CD8-positive, alpha-beta T cell (primary cell): ENCODE measurements at regions of chr2 and their contacts with region 1.

Region 1: GRCh38 chr2:234218266-234219180 is 168.0 kb downstream of the SPP2 start:
- DNase-seq: peak in 4 of 9 experiments; percentile 11 to 60 (median 14)
- ATAC-seq: no peak
- H3K4me3 ChIP-seq: no peak overlapping the region
- H3K4me3 Mint-ChIP-seq: peak overlapping the region; percentile 52
- H3K27ac ChIP-seq: no peak overlapping the region
- H3K27ac Mint-ChIP-seq: no peak overlapping the region
- H3K4me1 ChIP-seq: peaks cover 31% of the 10 kb centered on the region
- H3K4me1 Mint-ChIP-seq: peaks cover 43% of the 10 kb centered on the region
- H3K27me3 ChIP-seq: no peaks in the 10 kb centered on the region
- H3K27me3 Mint-ChIP-seq: no peaks in the 10 kb centered on the region
- CTCF ChIP-seq: no peak

Region 2: DNA sequence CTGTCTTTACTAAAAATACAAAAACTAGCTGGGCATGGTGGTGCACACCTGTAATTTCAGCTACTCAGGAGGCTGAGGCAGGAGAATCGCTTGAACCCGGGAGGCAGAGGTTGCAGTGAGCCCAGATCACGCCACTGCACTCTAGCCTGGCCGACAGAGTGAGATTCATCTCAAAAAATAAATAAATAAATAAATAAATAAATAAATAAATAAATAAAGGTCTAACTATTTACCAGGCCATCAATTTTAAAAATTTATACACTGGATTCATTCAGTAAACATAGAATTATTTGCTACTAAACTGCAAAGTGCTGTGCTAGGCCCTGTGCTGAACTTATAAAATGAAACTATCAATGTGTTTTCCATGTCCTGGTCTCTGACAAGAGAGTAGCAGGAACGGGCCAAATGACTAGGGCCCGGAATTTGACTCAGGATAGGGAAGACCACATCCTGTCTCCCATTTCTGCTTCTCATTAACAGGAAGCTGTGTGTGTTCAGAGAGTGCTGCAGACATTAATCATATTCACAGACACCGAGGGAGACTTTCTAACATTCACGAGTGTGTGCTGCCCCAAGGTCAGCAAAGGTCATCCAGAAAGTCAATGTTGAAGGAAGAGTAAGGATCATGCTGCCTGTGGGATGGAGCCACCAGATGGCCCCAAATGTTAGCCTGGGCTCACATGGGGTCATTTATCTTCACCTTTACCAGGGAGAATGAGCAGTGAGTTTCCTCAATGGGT is 72.3 kb before region 1 on chr2:
- CTCF ChIA-PET with region 1: no interaction called
- POLR2A ChIA-PET with region 1: no interaction called
- intact Hi-C with region 1: no loop called
- DNase-seq: no peak
- ATAC-seq: no peak
- H3K4me3 ChIP-seq: no peak overlapping the region
- H3K4me3 Mint-ChIP-seq: peak overlapping the region; percentile 10
- H3K27ac ChIP-seq: no peak overlapping the region
- H3K27ac Mint-ChIP-seq: peak overlapping the region; percentile 10
- H3K4me1 ChIP-seq: peaks cover 29% of the 10 kb centered on the region
- H3K4me1 Mint-ChIP-seq: peaks cover 34% of the 10 kb centered on the region
- H3K27me3 ChIP-seq: no peaks in the 10 kb centered on the region
- H3K27me3 Mint-ChIP-seq: no peaks in the 10 kb centered on the region
- CTCF ChIP-seq: no peak

Region 3: GRCh38 chr2:234169187-234169570 is 49.3 kb before region 1 on chr2:
- CTCF ChIA-PET with region 1: no interaction called
- POLR2A ChIA-PET with region 1: interaction called, 3 read pairs
- intact Hi-C with region 1: loop called in 1 of 2 experiments (anchors 10 kb)
- DNase-seq: no peak
- ATAC-seq: no peak
- H3K4me3 ChIP-seq: no peak overlapping the region
- H3K4me3 Mint-ChIP-seq: no peak overlapping the region
- H3K27ac ChIP-seq: no peak overlapping the region
- H3K27ac Mint-ChIP-seq: no peak overlapping the region
- H3K4me1 ChIP-seq: peaks cover 9% of the 10 kb centered on the region
- H3K4me1 Mint-ChIP-seq: peaks cover 15% of the 10 kb centered on the region
- H3K27me3 ChIP-seq: no peaks in the 10 kb centered on the region
- H3K27me3 Mint-ChIP-seq: no peaks in the 10 kb centered on the region
- CTCF ChIP-seq: no peak

Region 4: DNA sequence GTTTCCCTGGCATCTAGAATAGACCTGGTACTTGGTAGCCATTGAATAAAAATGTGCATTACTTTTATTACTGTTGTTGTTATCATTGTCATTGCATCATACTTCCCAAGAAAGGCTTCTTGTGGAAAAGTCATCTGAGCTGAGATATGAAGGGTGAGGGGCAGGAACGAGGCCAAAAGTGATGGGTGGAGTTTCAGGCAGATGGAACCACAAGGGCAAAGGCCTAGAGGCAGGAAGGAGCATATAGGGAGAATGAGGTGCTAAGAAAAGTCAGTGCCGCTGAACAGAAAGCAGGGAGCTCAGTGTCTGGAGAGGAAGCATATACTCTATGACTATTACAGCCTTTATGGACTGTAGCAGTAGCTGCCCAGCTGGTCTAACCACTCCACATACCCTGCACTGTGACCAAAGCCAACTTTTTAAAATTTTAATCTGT is 51.3 kb after region 1 on chr2:
- CTCF ChIA-PET with region 1: no interaction called
- POLR2A ChIA-PET with region 1: no interaction called
- intact Hi-C with region 1: loop called in 1 of 2 experiments (anchors 10 kb)
- DNase-seq: no peak
- ATAC-seq: no peak
- H3K4me3 ChIP-seq: no peak overlapping the region
- H3K4me3 Mint-ChIP-seq: no peak overlapping the region
- H3K27ac ChIP-seq: no peak overlapping the region
- H3K27ac Mint-ChIP-seq: no peak overlapping the region
- H3K4me1 ChIP-seq: peaks cover 28% of the 10 kb centered on the region
- H3K4me1 Mint-ChIP-seq: peaks cover 42% of the 10 kb centered on the region
- H3K27me3 ChIP-seq: no peaks in the 10 kb centered on the region
- H3K27me3 Mint-ChIP-seq: no peaks in the 10 kb centered on the region
- CTCF ChIP-seq: no peak

Region 5: GRCh38 chr2:234945420-234945819 is 726.9 kb after region 1 on chr2:
- CTCF ChIA-PET with region 1: no interaction called
- POLR2A ChIA-PET with region 1: no interaction called
- intact Hi-C with region 1: no loop called
- DNase-seq: no peak
- ATAC-seq: no peak
- H3K4me3 ChIP-seq: no peak overlapping the region
- H3K4me3 Mint-ChIP-seq: no peak overlapping the region
- H3K27ac ChIP-seq: no peak overlapping the region
- H3K27ac Mint-ChIP-seq: no peak overlapping the region
- H3K4me1 ChIP-seq: no peaks in the 10 kb centered on the region
- H3K4me1 Mint-ChIP-seq: no peaks in the 10 kb centered on the region
- H3K27me3 ChIP-seq: peaks cover 2 to 6% of the 10 kb centered on the region in 2 experiments
- H3K27me3 Mint-ChIP-seq: peaks cover 38% of the 10 kb centered on the region
- CTCF ChIP-seq: no peak